Naive thymus-derived CD8-positive, alpha-beta T cell (primary cell): ENCODE measurements at regions of chr1 and their contacts with region 1.

Region 1: DNA sequence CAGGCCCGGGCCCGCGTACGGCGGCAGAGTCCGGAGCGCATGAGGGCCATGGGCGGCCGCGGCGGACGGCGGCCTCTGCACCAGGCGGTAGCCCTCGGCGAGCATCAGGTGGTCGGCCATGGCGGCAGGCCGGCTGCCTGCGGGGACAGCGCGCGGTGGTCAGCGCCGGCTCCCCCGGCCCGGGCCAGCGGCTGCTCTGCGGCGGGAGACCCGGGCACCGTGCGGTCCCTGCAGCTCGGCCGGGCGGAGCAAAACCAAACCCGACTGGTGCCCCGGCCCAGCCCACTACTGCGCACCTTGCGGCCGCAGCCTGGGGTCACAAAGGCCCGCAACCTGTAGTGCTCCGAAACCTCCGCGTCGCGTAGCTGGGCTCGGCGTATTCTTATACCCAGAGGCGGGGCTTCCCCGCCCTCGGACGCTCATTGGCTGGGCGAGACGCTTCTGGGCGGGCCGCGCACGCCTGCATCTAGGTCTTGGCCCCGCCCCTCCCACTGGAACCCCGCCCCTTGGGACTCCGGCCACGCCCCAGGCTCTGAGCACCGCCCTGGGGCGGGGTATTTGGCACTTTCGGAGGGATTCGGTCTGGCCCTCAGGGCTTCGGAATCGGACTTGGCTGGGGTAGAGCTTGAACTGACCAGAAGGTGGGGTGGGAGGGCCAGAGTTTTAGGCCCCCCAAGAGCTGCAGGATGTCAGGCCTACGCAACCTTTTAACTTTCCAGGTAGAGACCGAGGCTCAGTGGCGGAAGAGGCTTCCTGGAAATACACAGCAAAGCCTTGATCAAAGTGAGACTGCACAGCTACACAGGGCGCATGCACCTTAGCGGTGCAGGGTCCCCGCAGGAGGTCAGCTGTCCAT is at the start of gene CITED4:
- DNase-seq: peak; percentile 93 to 98 (median 96)
- ATAC-seq: peak; percentile 93 to 95
- H3K4me3 Mint-ChIP-seq: peak within 1 kb of the TSS; percentile 92 to 98 (median 96)
- H3K27ac Mint-ChIP-seq: peak within 1 kb of the TSS; percentile 92 to 99 (median 99)
- H3K4me1 Mint-ChIP-seq: peaks cover 11 to 20% (median 19%) of the 10 kb centered on the region in 4 donors
- H3K27me3 Mint-ChIP-seq: peaks cover 0 to 7% (median 0%) of the 10 kb centered on the region in 5 donors
- polyA plus RNA-seq, gene CITED4: 24.5 to 45.4 (median 27.4) TPM

Region 2: DNA sequence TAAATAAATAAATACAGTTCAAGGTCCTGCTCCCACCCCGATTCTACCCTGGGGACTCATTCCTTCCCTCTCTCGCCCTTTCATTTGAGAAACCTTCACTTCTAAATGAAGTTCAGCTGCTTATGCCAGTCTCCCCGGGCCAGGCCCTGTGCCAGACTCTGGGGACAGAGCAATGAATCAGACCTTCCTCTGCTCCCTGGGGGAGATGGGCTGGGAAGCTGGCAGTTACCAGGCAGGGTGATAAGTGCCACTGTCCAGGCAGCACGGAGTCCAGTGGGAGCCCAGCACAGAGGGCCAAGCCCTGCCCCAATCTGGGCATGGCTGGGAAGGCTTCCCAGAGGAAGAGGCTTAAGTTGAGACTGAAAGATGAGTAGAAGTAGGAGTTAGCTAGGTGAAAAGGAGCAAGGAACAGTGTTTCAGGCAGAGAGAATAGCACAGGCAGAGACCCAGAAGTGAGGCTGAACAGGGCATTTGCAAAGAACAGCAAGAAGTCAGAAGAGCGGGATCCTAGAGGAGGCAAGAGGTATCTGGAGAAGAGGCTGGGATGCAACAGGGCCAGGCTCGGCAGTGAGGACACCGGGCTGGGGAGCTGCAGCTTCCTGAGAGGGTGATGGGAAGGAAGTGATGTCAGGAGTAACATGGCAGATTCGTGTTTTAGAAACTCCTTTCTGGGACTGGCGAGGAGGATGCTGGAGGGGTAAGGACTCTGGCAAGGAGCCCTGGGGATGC is 65.1 kb before region 1 on chr1:
- POLR2A ChIA-PET with region 1: interaction called, 15 read pairs
- DNase-seq: no peak
- ATAC-seq: no peak
- H3K4me3 Mint-ChIP-seq: peak overlapping the region in 8 of 10 donors; percentile 11 to 70 (median 40)
- H3K27ac Mint-ChIP-seq: peak overlapping the region in 9 of 10 donors; percentile 11 to 94 (median 81)
- H3K4me1 Mint-ChIP-seq: peaks cover 31 to 70% (median 66%) of the 10 kb centered on the region in 4 donors
- H3K27me3 Mint-ChIP-seq: no peaks in the 10 kb centered on the region

Region 3: GRCh38 chr1:40877698-40878097 is 15.5 kb after region 1 on chr1:
- POLR2A ChIA-PET with region 1: interaction called, 10 read pairs
- DNase-seq: no peak
- ATAC-seq: no peak
- H3K4me3 Mint-ChIP-seq: no peak overlapping the region
- H3K27ac Mint-ChIP-seq: peak overlapping the region in 1 of 10 donors; percentile 15
- H3K4me1 Mint-ChIP-seq: peaks cover 7 to 26% (median 8%) of the 10 kb centered on the region in 4 donors
- H3K27me3 Mint-ChIP-seq: peaks cover 2 to 30% (median 5%) of the 10 kb centered on the region in 5 donors

Region 4: DNA sequence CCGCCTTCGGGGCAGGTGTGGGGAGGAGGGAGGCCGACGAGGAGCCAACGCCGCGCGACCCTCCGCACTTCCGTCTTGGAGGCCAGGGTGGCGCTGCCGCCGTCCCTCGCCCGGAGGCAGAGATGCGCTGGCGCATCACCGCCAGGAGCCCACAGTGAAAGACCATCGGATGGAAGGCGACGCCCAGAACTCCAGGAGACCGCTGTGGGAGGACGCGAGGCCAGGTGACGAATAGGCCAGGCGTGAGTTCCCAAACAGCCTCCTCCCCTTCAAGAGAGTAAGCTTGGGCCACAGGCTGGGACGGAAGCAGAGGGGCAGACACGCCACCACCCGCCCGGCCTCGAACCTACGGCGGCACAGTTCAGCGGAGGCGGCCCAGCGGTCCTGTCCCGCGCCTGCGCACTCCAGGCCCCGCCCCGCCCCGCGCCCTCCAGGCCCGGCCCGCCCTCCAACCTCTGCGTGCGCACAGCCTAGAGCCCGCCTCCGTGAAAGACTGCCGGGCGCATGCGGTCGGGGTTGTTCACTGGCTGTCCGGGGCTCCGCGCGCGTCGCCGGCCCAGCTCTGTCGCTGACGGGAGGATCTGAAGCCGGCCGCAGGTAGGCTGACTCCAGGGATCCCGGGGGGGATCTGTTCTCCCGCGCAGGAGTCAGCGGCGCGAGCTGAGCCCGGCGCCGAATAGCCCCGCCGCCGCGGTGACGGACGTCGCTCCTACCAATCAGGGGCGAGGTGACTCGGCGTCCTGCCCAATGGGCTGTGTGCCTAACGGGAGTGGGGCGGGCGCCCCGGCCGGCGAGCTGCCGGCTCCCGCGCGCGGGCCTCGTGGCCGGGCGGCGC is 117.2 kb after region 1 on chr1 and contains the start of gene CTPS1:
- POLR2A ChIA-PET with region 1: interaction called, 24 read pairs
- DNase-seq: peak; percentile 89 to 98 (median 96)
- ATAC-seq: peak; percentile 88 to 89
- H3K4me3 Mint-ChIP-seq: peak within 1 kb of the TSS; percentile 81 to 99 (median 96)
- H3K27ac Mint-ChIP-seq: peak within 1 kb of the TSS; percentile 83 to 99 (median 98)
- H3K4me1 Mint-ChIP-seq: peaks cover 23 to 37% (median 24%) of the 10 kb centered on the region in 4 donors
- H3K27me3 Mint-ChIP-seq: no peaks in the 10 kb centered on the region
- polyA plus RNA-seq, gene CTPS1: 12.7 to 21.3 (median 19.0) TPM